ENCODE measurements at regions of chr10 and their contacts with region 1.

Region 1: DNA sequence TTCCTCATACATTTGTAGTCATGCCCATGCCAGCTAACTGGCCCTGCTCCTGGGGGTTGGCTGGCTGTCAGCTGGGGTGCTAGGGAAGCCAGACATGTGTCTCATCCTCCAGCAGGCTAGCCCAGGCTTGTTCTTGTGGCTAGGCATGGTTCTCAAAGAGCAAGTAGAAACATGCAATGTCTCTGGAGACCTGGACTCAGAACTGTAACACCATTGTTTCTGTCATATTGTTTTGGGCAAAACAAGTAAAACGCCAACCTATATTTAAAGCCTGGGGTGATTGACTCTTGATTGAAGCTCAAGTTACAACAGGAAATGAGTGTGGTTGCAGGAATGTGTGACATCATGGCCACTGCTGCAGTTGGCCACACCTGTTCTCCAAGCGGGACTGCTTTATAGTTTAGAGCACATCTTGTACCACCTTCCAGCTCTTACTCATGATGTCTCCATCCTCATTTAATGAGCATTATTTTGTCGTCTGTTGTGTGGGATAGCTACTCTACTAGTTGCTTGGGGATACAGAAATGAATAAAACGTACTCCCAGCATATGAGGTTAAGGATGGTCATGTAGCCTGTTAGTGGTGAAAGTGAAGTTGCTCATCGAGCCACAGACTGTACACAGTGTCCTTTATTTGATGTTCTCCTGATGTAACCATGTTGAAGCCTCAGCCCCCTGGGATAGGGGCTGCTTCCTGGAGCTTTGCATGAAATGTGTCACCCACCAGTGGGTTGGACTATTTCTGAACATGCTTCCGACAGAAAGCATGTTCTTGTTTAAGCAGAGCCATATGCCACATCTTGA is 168.4 kb downstream of the SORCS3 start:
- DNase-seq: no peak

Region 2: DNA sequence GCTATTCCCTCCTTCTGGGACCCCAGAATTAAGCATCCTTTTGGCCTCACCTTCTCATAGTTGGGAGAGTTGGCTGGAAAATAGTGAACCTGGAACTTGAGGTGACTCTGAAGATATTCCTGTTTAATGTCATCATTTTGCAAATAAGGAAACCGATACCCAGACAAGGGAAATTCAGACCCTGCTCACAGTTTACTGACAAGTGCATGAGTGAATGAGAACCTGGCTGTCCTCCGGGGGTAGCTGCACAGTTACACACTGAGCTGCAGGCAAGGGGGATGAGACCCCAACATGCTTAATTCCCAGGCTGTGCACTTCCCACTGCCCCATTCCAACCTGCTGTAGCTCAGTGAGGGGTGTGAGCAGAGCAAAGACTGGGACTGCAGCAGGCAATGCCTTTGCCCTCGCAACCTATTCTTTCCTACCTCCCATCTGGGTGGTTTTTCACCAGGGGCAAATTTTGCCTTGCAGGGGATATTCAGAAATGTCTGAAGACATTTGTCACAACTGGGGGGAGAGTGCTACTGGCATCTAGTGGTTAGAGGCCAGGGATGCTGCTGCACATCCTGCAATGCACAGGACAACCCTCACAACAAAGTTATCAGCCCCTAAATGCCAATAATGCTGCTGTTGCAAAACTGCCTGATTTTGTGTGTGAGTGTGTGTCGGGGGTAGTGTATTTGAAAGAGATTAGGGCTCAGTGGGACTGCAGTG is 32.2 kb before region 1 on chr10:
- intact Hi-C with region 1: loop called in 1 of 2 experiments (anchors 2 kb)
- DNase-seq: no peak